Panc1 (cell line): ENCODE measurements at regions of chr14 and their contacts with region 1.

Region 1: GRCh38 chr14:101559624-101560533 is 1.4 kb upstream of the DIO3 start:
- DNase-seq: no peak
- ATAC-seq: peak; percentile 89
- H3K4me3 ChIP-seq: peak overlapping the region; percentile 47 to 67
- H3K27ac ChIP-seq: peak overlapping the region; percentile 61; the same call in 1 of the 2 replicates
- H3K4me1 ChIP-seq: no peaks in the 10 kb centered on the region
- H3K27me3 ChIP-seq: no peaks in the 10 kb centered on the region
- CTCF ChIP-seq: peak; percentile 79

Region 2: GRCh38 chr14:101235335-101236103 is 324.4 kb before region 1 on chr14:
- CTCF ChIA-PET with region 1: no interaction called
- POLR2A ChIA-PET with region 1: no interaction called
- in situ Hi-C with region 1: no loop called
- intact Hi-C with region 1: loop called (anchors 10 kb)
- DNase-seq: no peak
- ATAC-seq: peak; percentile 94
- H3K4me3 ChIP-seq: no peak overlapping the region
- H3K27ac ChIP-seq: no peak overlapping the region
- H3K4me1 ChIP-seq: no peaks in the 10 kb centered on the region
- H3K27me3 ChIP-seq: no peaks in the 10 kb centered on the region
- CTCF ChIP-seq: peak; percentile 85

Region 3: GRCh38 chr14:101364503-101365328 is 195.2 kb before region 1 on chr14:
- CTCF ChIA-PET with region 1: no interaction called
- POLR2A ChIA-PET with region 1: no interaction called
- in situ Hi-C with region 1: no loop called
- intact Hi-C with region 1: no loop called
- DNase-seq: no peak
- ATAC-seq: no peak
- H3K4me3 ChIP-seq: no peak overlapping the region
- H3K27ac ChIP-seq: no peak overlapping the region
- H3K4me1 ChIP-seq: peaks cover under 1% of the 10 kb centered on the region
- H3K27me3 ChIP-seq: no peaks in the 10 kb centered on the region
- CTCF ChIP-seq: no peak

Region 4: DNA sequence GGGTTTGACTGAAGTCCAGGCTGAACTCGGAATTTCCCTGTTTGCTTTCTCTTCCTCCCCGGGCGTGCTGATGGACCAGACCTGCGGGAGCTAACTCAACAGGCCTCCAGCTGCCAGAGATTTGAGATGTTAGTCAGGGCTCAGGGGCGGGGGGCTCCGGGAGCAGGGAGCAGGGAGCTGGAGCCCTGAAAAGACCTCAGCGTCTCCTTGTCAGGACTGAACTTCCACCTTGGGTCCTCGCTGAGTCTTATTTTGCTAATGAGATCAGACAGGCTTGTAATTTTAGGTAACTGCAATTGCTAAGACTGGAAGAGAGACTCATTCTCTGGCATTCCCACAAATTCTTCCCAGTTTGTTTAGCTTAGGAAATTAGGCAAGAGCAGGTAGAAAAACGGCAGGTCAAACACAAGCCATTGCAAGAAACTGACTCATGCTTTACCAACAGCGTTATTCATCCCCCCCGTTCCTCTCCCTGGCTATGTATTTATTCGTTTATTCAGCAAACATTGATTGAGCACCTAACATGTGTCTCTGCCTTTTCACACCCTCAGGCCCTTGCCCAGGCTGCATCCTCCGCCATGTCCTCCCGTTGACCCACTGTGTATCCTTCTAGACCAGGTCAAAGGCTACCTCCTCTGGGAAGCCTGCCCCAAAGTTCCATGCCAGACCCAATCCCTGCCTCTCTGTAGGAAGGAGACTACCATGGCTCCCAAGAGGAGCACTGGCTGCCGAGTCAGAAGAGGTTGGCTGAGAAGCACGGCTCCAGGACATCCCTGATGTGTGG is 78.9 kb before region 1 on chr14:
- CTCF ChIA-PET with region 1: no interaction called
- POLR2A ChIA-PET with region 1: no interaction called
- in situ Hi-C with region 1: no loop called
- intact Hi-C with region 1: loop called (anchors 10 kb)
- DNase-seq: peak; percentile 89
- ATAC-seq: peak; percentile 77
- H3K4me3 ChIP-seq: peak overlapping the region in 1 of 2 experiments; percentile 26; a peak in 2 of 4 replicates
- H3K27ac ChIP-seq: peak overlapping the region; percentile 84
- H3K4me1 ChIP-seq: peaks cover 17% of the 10 kb centered on the region
- H3K27me3 ChIP-seq: no peaks in the 10 kb centered on the region
- CTCF ChIP-seq: no peak

Region 5: DNA sequence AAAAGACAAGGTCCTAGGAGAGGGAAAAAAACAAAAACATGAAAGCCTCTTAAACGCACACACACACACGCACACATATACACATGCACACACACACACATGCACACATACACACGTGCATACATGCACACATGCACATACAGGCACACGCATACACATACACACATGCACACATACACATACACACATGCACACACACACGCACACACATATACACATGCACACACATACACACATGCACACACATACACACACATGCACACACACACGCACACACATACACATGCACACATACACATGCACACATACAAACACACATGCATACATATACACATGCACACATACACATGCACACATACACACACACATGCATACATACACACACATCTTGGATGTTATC is 123.5 kb after region 1 on chr14:
- CTCF ChIA-PET with region 1: no interaction called
- POLR2A ChIA-PET with region 1: interaction called, 12 read pairs
- in situ Hi-C with region 1: no loop called
- intact Hi-C with region 1: no loop called
- DNase-seq: no peak
- ATAC-seq: no peak
- H3K4me3 ChIP-seq: no peak overlapping the region
- H3K27ac ChIP-seq: no peak overlapping the region
- H3K4me1 ChIP-seq: no peaks in the 10 kb centered on the region
- H3K27me3 ChIP-seq: no peaks in the 10 kb centered on the region
- CTCF ChIP-seq: no peak